ENCODE measurements at regions of chr7 and their contacts with region 1.

Region 1: GRCh38 chr7:144174613-144175012 is 8.7 kb upstream of the CTAGE4 start:
- DNase-seq: no peak
- H3K4me3 ChIP-seq: no peak overlapping the region
- H3K4me3 Mint-ChIP-seq: no peak overlapping the region
- H3K27ac ChIP-seq: no peak overlapping the region
- H3K27ac Mint-ChIP-seq: no peak overlapping the region
- H3K4me1 ChIP-seq: peaks cover 0 to 4% of the 10 kb centered on the region in 2 donors
- H3K4me1 Mint-ChIP-seq: peaks cover 12% of the 10 kb centered on the region
- H3K27me3 ChIP-seq: no peaks in the 10 kb centered on the region
- H3K27me3 Mint-ChIP-seq: peaks cover 0 to 4% (median 1%) of the 10 kb centered on the region in 3 donors
- CTCF ChIP-seq: no peak

Region 2: GRCh38 chr7:144391823-144392255 is 217.2 kb after region 1 on chr7:
- intact Hi-C with region 1: loop called in 1 of 2 experiments (anchors 10 kb)
- DNase-seq: peak; percentile 18 to 44 (median 32)
- H3K4me3 ChIP-seq: no peak overlapping the region
- H3K4me3 Mint-ChIP-seq: peak overlapping the region in 1 of 2 donors; percentile 63
- H3K27ac ChIP-seq: no peak overlapping the region
- H3K27ac Mint-ChIP-seq: peak overlapping the region in 1 of 7 donors; percentile 33
- H3K4me1 ChIP-seq: no peaks in the 10 kb centered on the region
- H3K4me1 Mint-ChIP-seq: peaks cover 4% of the 10 kb centered on the region
- H3K27me3 ChIP-seq: no peaks in the 10 kb centered on the region
- H3K27me3 Mint-ChIP-seq: peaks cover 1 to 5% (median 4%) of the 10 kb centered on the region in 3 donors
- CTCF ChIP-seq: peak; percentile 66

Measured in CD14-positive monocyte (primary cell).